Adrenal gland (tissue), 19 donors: ENCODE measurements at regions of chr5 and their contacts with region 1.

Region 1: DNA sequence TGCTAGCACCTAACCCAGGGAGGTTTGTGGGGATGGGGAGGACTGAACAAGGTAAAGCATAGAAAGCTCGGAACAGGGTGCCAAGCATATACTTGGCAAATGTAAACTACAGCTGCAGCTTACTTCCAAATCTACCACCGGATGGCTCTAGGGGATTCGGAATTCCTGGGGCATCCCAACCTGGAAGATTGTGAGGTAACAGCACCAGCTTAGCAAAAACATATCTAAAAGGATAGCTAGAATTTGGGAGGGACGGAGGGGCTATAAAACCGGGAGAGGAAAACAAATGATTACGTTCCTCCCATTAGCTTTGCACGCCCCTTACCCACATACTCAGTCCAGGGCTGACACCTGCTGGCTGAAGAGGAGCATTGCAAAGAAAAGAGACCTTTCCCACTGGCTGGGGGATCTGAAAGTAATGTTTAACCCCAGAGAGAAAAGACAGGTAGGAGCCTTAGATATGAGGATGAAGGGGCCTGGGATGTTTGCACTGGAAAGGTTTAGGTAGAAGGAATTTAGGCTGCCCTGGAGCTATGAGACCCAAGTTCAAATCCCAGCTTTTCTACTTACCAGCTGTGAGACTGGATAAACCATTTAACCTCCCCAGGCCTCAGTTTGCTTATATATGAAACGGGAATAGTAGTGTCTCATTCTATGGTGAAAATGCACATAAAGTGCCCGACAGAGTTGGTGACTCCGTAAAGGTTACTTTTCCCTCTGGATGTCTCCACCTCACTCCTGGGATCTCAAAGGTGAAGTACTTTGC is 73.6 kb downstream of the FAM114A2 start:
- DNase-seq: peak; percentile 39 to 71 (median 56)
- H3K4me3 ChIP-seq: peak overlapping the region in 1 of 4 donors; percentile 41
- H3K27ac ChIP-seq: no peak overlapping the region
- H3K4me1 ChIP-seq: no peaks in the 10 kb centered on the region
- H3K27me3 ChIP-seq: no peaks in the 10 kb centered on the region
- CTCF ChIP-seq: peak; percentile 82 to 96 (median 90)
- POLR2A ChIP-seq: no peak

Region 2: DNA sequence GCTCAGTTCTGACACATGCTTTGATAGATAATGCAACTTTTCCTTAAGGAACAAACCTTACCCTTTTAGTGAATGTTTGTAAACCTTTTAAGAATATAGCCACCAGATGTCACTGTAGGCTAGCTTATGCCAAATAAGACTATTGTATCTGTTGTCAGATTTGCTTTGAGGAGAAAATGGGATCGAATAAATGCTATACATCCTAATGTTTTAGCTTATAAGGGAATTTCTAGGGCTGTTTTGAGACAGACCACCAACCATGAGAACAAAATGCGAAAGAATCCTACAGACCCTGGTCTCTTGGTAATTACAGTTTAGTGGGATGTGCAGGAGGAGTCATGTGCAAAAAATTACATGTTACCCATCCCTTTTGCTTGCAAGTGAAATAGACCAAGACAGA is 1432.3 kb before region 1 on chr5:
- intact Hi-C with region 1: loop called in 1 of 2 experiments (anchors 5 kb)
- DNase-seq: no peak
- H3K4me3 ChIP-seq: no peak overlapping the region
- H3K27ac ChIP-seq: no peak overlapping the region
- H3K4me1 ChIP-seq: no peaks in the 10 kb centered on the region
- H3K27me3 ChIP-seq: no peaks in the 10 kb centered on the region
- CTCF ChIP-seq: peak; percentile 28 to 67 (median 52)
- POLR2A ChIP-seq: no peak

Region 3: GRCh38 chr5:152560512-152561137 is 1404.4 kb before region 1 on chr5:
- intact Hi-C with region 1: loop called in 1 of 2 experiments (anchors 10 kb)
- DNase-seq: peak; percentile 36 to 81 (median 57)
- H3K4me3 ChIP-seq: no peak overlapping the region
- H3K27ac ChIP-seq: no peak overlapping the region
- H3K4me1 ChIP-seq: no peaks in the 10 kb centered on the region
- H3K27me3 ChIP-seq: no peaks in the 10 kb centered on the region
- CTCF ChIP-seq: peak; percentile 37 to 66 (median 54)
- POLR2A ChIP-seq: no peak

Region 4: GRCh38 chr5:153496835-153497234 is 468.2 kb before region 1 on chr5:
- intact Hi-C with region 1: loop called (anchors 5 to 10 kb)
- DNase-seq: peak in 3 of 7 donors; percentile 11 to 29 (median 16)
- H3K4me3 ChIP-seq: no peak overlapping the region
- H3K27ac ChIP-seq: no peak overlapping the region
- H3K4me1 ChIP-seq: no peaks in the 10 kb centered on the region
- H3K27me3 ChIP-seq: no peaks in the 10 kb centered on the region
- CTCF ChIP-seq: peak; percentile 66 to 96 (median 80)
- POLR2A ChIP-seq: no peak

Region 5: GRCh38 chr5:154025951-154026350 is 60.9 kb after region 1 on chr5:
- intact Hi-C with region 1: no loop called
- DNase-seq: no peak
- H3K4me3 ChIP-seq: no peak overlapping the region
- H3K27ac ChIP-seq: no peak overlapping the region
- H3K4me1 ChIP-seq: no peaks in the 10 kb centered on the region
- H3K27me3 ChIP-seq: no peaks in the 10 kb centered on the region
- CTCF ChIP-seq: no peak
- POLR2A ChIP-seq: no peak